Heart right ventricle (tissue), 16 donors: ENCODE measurements at regions of chr12 and their contacts with region 1.

Region 1: DNA sequence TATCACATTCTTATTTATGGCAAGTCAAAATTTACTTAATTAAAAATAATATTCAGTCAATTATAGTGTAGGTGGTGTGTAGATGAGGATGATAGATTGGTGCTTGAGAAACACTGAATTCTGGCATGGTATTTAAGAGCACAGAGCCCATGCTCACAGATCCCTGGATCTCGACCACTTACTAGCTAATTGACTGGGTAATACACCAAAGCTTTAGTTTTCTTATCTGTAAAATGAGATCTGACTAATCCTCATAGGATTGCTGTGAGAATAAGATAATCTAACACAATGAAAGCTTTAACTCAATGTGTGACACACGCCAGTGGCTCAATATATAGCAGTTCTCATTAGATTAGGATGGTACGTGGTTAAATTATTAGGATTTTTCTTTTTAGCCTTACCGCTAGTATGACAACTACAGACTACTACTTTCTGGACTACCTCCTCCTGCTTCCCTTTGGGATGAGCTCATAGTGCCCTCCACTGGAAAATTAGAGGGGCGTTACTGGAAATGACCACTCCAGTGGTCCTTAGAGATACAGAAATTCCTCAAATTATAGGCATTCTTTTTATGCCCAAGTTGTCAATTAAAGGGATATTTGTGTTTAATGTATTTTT is 482.8 kb upstream of the TBX3 start:
- DNase-seq: no peak
- ATAC-seq: peak in 4 of 8 donors; percentile 42 to 63 (median 50)
- H3K4me3 ChIP-seq: no peak overlapping the region
- H3K27ac ChIP-seq: no peak overlapping the region
- H3K4me1 ChIP-seq: no peaks in the 10 kb centered on the region
- H3K27me3 ChIP-seq: peaks cover 0 to 2% (median 0%) of the 10 kb centered on the region in 7 donors
- CTCF ChIP-seq: peak in 6 of 9 donors; percentile 24 to 64 (median 44)

Region 2: DNA sequence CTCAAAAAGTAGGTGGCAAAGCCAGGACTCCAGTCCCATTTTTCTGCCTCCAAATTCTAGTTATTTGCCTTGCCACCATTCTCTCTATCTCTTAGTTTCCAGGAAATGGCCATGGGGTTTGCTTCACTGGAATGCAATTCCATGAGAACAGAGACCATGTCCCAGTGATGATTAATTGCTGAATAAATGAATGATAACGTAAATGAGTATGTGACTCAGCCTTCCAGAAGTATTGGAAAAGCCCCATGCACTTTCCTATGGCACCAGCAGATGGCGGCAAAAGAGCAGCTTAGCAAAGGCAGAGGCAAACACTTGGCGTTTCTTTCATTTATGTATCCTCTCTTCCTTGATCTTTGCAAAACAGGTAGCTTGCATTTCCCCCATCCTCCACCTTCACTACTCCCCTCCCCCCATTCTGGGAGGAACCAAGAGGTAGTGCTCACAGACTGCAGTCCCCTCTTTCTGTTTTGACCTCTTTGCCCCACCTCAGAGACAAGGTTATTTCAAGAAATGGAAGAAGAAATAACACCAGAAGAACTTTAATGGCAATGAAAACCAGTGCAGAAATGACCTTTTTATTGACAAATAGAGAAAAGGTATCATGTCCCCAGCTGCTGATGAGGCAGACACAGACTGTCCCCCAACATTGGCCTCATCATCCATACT is 504.2 kb before region 1 on chr12:
- intact Hi-C with region 1: loop called in 5 of 10 experiments (anchors 5 to 10 kb)
- DNase-seq: peak; percentile 72 to 73
- ATAC-seq: peak in 3 of 8 donors; percentile 46 to 50 (median 49)
- H3K4me3 ChIP-seq: no peak overlapping the region
- H3K27ac ChIP-seq: no peak overlapping the region
- H3K4me1 ChIP-seq: peaks cover 0 to 19% (median 13%) of the 10 kb centered on the region in 9 donors
- H3K27me3 ChIP-seq: peaks cover 6 to 78% (median 61%) of the 10 kb centered on the region in 7 donors
- CTCF ChIP-seq: peak in 8 of 9 donors; percentile 87 to 99 (median 96)

Region 3: DNA sequence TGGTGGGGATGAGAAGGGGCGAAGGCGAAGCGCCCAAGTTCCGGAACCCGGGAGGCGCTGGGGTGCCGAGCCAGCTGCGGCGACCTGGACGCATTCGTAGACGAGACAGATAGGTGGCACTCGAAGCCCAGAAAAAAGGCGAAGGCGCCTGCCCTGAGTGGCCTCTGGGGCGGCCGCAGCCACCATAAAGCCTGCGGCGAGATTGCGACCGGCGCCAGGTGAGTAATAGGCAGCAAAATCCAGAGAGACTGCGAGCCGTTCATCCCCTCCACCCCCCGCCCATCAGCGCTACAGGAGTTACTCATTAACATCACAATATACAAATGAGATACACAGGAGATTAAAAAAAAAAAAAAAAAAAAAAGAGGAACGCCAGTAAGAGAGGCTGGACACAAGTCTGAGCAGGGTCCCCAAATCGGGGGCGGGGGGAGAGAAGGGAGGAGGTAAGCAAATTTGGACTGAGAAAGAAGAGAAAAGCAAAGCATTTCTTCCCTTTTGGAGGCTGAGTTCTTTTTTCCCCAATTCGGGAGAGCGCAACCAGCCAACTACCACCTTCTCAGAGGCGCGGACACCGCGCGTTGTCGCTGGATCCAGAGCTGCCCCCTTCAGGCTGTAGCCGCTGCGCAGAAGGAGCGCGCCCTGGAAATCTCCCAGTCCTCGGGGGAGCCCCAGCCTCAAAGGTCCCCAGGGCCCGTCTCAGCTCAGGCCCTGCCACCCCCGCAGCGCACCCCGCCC is 498.5 kb before region 1 on chr12:
- intact Hi-C with region 1: loop called in 6 of 10 experiments (anchors 1 to 10 kb)
- DNase-seq: peak; percentile 78 to 81
- ATAC-seq: peak; percentile 88 to 94 (median 92)
- H3K4me3 ChIP-seq: peak overlapping the region in 9 of 10 donors; percentile 33 to 54 (median 50)
- H3K27ac ChIP-seq: peak overlapping the region in 6 of 10 donors; percentile 22 to 48 (median 31)
- H3K4me1 ChIP-seq: peaks cover 2 to 43% (median 18%) of the 10 kb centered on the region in 9 donors
- H3K27me3 ChIP-seq: peaks cover 6 to 100% (median 51%) of the 10 kb centered on the region in 7 donors
- CTCF ChIP-seq: peak; percentile 39 to 79 (median 65)

Region 4: GRCh38 chr12:114920771-114921554 is 245.8 kb before region 1 on chr12:
- intact Hi-C with region 1: loop called in 1 of 10 experiments (anchors 10 kb)
- DNase-seq: peak in 1 of 2 donors; percentile 9
- ATAC-seq: peak in 7 of 8 donors; percentile 47 to 87 (median 77)
- H3K4me3 ChIP-seq: no peak overlapping the region
- H3K27ac ChIP-seq: peak overlapping the region in 4 of 10 donors; percentile 1 to 50 (median 42)
- H3K4me1 ChIP-seq: peaks cover 0 to 23% (median 8%) of the 10 kb centered on the region in 9 donors
- H3K27me3 ChIP-seq: no peaks in the 10 kb centered on the region
- CTCF ChIP-seq: no peak

Region 5: DNA sequence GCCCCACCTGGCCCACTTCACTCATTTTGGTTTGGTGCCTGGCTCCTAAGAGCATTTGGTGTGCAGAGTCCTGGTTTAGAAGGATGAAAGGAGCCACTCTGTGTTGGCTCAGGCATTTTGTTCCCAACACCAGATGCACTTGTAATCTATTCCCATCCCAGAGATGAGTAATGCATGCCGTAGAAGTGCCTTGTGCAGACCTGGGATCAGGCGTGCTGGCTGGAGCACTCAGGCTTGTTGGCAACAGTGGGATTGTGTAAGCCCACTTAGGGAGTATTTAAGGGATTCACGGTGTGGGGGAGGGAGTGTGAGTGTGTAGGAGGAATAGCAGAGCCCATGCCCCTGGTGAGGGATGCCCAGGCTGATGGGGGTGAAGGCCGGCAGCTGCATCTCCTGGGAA is 18.7 kb after region 1 on chr12:
- intact Hi-C with region 1: no loop called
- DNase-seq: peak in 1 of 2 donors; percentile 16
- ATAC-seq: peak in 5 of 8 donors; percentile 33 to 84 (median 61)
- H3K4me3 ChIP-seq: no peak overlapping the region
- H3K27ac ChIP-seq: no peak overlapping the region
- H3K4me1 ChIP-seq: peaks cover 0 to 9% (median 0%) of the 10 kb centered on the region in 9 donors
- H3K27me3 ChIP-seq: no peaks in the 10 kb centered on the region
- CTCF ChIP-seq: no peak

Region 6: GRCh38 chr12:115716551-115716950 is 549.7 kb after region 1 on chr12:
- intact Hi-C with region 1: no loop called
- DNase-seq: no peak
- ATAC-seq: no peak
- H3K4me3 ChIP-seq: no peak overlapping the region
- H3K27ac ChIP-seq: no peak overlapping the region
- H3K4me1 ChIP-seq: no peaks in the 10 kb centered on the region
- H3K27me3 ChIP-seq: peaks cover 0 to 4% (median 2%) of the 10 kb centered on the region in 7 donors
- CTCF ChIP-seq: no peak